ENCODE measurements at regions of chr11 and their contacts with region 1.

Region 1: DNA sequence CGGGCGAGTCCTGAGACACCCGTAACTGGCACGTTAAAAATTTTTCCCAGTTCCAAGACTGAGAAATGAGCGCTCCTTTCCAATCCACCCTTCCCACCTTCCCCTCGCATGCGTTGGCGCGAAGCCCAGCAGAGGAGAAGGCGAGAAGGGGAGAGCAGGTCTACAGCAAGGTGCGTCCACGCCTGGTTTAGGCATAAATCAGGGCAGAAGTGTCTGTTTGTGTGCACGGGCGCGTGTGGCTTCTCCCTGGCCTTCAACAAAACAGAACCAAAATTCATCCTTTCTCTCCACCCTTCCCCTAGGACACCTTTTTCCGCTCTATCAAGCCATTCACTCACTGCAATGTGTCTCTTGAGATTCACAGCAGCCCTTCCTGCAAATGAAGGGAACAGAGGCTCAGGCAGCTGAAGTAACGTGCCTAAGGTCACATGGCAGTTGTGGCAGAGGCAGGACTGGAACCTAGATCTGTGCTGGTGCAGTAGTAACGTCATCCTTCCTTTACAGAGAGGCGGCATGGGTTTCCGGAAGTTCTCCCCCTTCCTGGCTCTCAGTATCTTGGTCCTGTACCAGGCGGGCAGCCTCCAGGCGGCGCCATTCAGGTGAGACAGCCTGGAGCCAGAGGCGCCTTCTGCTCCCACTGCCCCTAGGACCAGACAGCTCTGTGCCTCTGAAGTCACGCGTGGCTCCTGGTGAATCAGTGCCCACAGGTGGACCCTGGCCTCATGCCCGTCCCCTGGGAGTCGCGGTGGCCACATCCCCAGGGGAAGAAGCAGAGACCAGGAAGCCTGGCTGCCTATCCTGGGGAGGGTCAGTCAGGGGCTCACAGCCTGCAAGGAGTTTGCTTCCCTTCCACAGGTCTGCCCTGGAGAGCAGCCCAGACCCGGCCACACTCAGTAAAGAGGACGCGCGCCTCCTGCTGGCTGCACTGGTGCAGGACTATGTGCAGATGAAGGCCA is 1.1 kb downstream of the CALCB start:
- DNase-seq: peak; percentile 91 to 93
- H3K4me3 ChIP-seq: peak overlapping the region; percentile 28 to 48 (median 37)
- H3K27ac ChIP-seq: no peak overlapping the region
- H3K4me1 ChIP-seq: peaks cover 15 to 23% (median 22%) of the 10 kb centered on the region in 4 donors
- H3K27me3 ChIP-seq: peaks cover 0 to 55% (median 39%) of the 10 kb centered on the region in 3 donors
- CTCF ChIP-seq: peak in 5 of 7 experiments; percentile 47 to 71 (median 67)
- EP300 ChIP-seq: no peak
- POLR2A ChIP-seq: no peak

Region 2: GRCh38 chr11:14789879-14790484 is 284.5 kb before region 1 on chr11:
- intact Hi-C with region 1: loop called (anchors 10 kb)
- DNase-seq: peak in 1 of 2 donors; percentile 30
- H3K4me3 ChIP-seq: no peak overlapping the region
- H3K27ac ChIP-seq: no peak overlapping the region
- H3K4me1 ChIP-seq: no peaks in the 10 kb centered on the region
- H3K27me3 ChIP-seq: no peaks in the 10 kb centered on the region
- CTCF ChIP-seq: peak in 5 of 7 experiments; percentile 5 to 44 (median 41)
- EP300 ChIP-seq: no peak
- POLR2A ChIP-seq: no peak

Region 3: DNA sequence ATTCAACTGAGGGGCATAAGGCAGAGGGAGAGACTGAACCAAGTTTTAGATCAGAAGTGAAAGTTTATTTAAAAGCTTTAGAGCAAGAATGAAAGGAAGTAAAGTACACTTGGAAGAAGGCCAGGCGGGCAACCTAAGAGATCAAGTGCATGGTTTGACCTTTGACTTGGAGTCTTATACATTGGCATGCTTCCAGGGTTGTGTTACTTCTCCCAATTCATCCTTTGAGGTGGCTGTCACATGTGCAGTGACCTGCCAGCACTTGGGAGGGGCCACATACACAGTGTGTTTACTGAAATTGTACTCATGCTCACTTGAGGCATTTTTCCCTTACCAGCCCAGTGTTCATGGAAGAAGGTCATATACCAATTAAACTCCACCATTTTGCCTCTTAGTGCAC is 212.8 kb before region 1 on chr11:
- intact Hi-C with region 1: no loop called
- DNase-seq: peak; percentile 32 to 56
- H3K4me3 ChIP-seq: no peak overlapping the region
- H3K27ac ChIP-seq: no peak overlapping the region
- H3K4me1 ChIP-seq: no peaks in the 10 kb centered on the region
- H3K27me3 ChIP-seq: no peaks in the 10 kb centered on the region
- CTCF ChIP-seq: no peak
- EP300 ChIP-seq: no peak
- POLR2A ChIP-seq: no peak

Region 4: DNA sequence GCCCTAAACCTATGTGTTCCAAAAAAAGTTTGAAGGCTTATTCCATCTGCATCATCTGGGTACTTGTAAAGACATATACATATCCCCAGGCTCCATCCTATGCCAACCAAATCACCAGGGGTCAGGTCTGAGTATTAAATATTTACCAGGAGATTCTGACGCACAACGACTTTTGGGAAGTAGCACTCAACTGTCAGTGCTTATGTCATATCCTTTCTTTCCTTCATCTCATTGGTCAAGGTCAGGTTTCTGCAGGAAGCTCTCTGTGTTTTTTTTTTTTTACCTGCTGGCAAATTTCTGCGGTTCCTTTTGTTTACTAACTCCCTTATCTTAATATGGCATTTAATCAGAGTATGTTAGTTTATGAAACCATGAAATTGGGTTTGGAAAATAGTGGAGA is 159.9 kb before region 1 on chr11:
- intact Hi-C with region 1: loop called (anchors 10 kb)
- DNase-seq: no peak
- H3K4me3 ChIP-seq: no peak overlapping the region
- H3K27ac ChIP-seq: no peak overlapping the region
- H3K4me1 ChIP-seq: no peaks in the 10 kb centered on the region
- H3K27me3 ChIP-seq: no peaks in the 10 kb centered on the region
- CTCF ChIP-seq: no peak
- EP300 ChIP-seq: no peak
- POLR2A ChIP-seq: no peak

Region 5: GRCh38 chr11:15551901-15552851 is 477.7 kb after region 1 on chr11:
- intact Hi-C with region 1: no loop called
- DNase-seq: no peak
- H3K4me3 ChIP-seq: no peak overlapping the region
- H3K27ac ChIP-seq: no peak overlapping the region
- H3K4me1 ChIP-seq: no peaks in the 10 kb centered on the region
- H3K27me3 ChIP-seq: no peaks in the 10 kb centered on the region
- CTCF ChIP-seq: no peak
- EP300 ChIP-seq: no peak
- POLR2A ChIP-seq: no peak

Measured in stomach (tissue), 19 donors.